IMR-90 (cell line): ENCODE measurements at regions of chr1 and their contacts with region 1.

Region 1: DNA sequence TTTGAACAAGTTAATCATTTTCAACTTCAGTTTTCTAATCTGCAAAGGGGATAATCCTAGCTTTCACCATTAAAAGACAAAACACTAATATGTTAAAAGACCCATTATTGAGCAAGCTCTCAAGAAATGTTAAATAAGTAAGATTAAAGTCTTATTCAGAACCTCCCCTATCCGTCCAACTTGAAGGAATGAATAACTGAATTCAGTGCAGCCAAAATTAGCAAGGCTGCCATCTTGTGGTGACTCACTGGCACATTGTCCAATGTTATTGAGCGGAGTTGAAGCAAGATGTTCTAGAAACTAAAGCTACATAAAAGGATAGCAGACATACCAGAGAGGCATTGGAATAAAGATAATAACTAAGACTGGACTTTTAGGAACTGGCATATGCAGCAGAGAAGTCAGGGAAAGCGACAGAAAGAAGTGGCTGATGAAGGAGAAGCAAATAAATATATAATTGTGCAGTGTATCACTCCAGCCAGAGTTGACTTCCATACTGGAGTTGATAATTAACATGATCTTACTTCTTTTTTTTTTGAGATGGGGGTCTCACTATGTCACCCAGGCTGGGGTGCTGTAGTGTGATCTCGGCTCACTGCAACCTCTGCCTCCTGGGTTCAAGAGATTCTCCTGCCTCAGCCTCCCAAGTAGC is 8.2 kb upstream of the CAP1 start:
- DNase-seq: peak; percentile 76
- ATAC-seq: peak; percentile 80
- H3K4me3 ChIP-seq: no peak overlapping the region
- H3K27ac ChIP-seq: no peak overlapping the region
- H3K4me1 ChIP-seq: peaks cover 5% of the 10 kb centered on the region
- H3K27me3 ChIP-seq: no peaks in the 10 kb centered on the region
- CTCF ChIP-seq: peak; percentile 74
- POLR2A ChIP-seq: no peak
- RAD21 ChIP-seq: peak; percentile 70

Region 2: GRCh38 chr1:39919545-39919944 is 112.8 kb before region 1 on chr1:
- CTCF ChIA-PET with region 1: interaction called, 37 read pairs
- POLR2A ChIA-PET with region 1: no interaction called
- dilution Hi-C with region 1: no loop called
- in situ Hi-C with region 1: no loop called
- intact Hi-C with region 1: loop called (anchors 1 kb)
- DNase-seq: peak; percentile 58
- ATAC-seq: peak; percentile 89
- H3K4me3 ChIP-seq: no peak overlapping the region
- H3K27ac ChIP-seq: no peak overlapping the region
- H3K4me1 ChIP-seq: no peaks in the 10 kb centered on the region
- H3K27me3 ChIP-seq: peaks cover 15% of the 10 kb centered on the region
- CTCF ChIP-seq: peak; percentile 76
- POLR2A ChIP-seq: no peak
- RAD21 ChIP-seq: peak; percentile 78

Region 3: DNA sequence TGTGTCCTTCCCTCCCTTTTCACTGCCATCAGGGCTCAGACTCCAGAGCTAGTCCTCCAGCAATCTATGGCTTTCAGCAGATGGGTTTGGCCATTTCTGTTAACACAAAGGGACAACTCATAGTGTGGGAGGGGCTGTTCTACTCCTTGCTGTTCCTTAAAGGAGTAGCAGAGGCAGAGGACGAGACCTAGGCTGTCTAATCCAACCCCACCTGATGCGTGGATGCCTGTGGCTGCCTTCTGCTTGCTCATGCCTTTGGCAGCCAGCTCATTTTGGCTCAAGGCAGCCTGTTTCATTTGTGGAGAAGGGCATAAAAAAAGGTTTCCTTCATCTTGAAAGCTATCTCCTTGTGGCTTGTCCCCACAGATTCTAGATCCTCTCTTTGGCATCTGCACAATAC is 50.4 kb before region 1 on chr1:
- CTCF ChIA-PET with region 1: interaction called, 9 read pairs
- POLR2A ChIA-PET with region 1: no interaction called
- dilution Hi-C with region 1: no loop called
- in situ Hi-C with region 1: loop called (anchors 5 kb)
- intact Hi-C with region 1: loop called (anchors 2 kb)
- DNase-seq: peak; percentile 93
- ATAC-seq: peak; percentile 99
- H3K4me3 ChIP-seq: no peak overlapping the region
- H3K27ac ChIP-seq: no peak overlapping the region
- H3K4me1 ChIP-seq: peaks cover 2% of the 10 kb centered on the region
- H3K27me3 ChIP-seq: no peaks in the 10 kb centered on the region
- CTCF ChIP-seq: no peak
- POLR2A ChIP-seq: no peak
- RAD21 ChIP-seq: no peak

Region 4: GRCh38 chr1:40178200-40178599 is 145.8 kb after region 1 on chr1:
- CTCF ChIA-PET with region 1: no interaction called
- POLR2A ChIA-PET with region 1: no interaction called
- dilution Hi-C with region 1: no loop called
- in situ Hi-C with region 1: no loop called
- intact Hi-C with region 1: no loop called
- DNase-seq: no peak
- ATAC-seq: no peak
- H3K4me3 ChIP-seq: no peak overlapping the region
- H3K27ac ChIP-seq: no peak overlapping the region
- H3K4me1 ChIP-seq: peaks cover 2% of the 10 kb centered on the region
- H3K27me3 ChIP-seq: no peaks in the 10 kb centered on the region
- CTCF ChIP-seq: no peak
- POLR2A ChIP-seq: no peak
- RAD21 ChIP-seq: no peak